AG04450 (cell line): ENCODE measurements at regions of chr6 and their contacts with region 1.

Region 1: DNA sequence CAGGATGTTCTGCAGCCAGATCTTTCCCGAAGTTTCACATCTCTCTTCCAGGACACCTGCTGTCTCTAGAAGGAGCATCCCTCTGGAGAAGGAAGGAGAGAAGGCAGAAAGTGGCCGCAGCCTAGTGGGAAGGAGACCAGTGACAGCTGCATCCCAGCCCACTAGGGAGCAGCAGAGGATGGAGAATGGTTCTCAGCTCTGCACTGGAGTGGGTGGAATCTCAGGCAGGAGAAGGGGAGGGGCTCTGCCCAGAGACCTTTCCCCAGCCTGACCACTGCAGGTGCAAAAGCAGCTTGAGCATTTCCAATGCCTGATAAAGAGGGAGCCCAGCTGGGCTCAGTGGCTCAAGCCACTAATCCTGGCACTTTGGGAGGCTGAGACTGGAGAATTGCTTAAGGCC is 32.3 kb downstream of the NCR2 start:
- DNase-seq: peak; percentile 13
- H3K4me3 ChIP-seq: no peak overlapping the region
- H3K27ac ChIP-seq: no peak overlapping the region
- H3K27me3 ChIP-seq: peaks cover 41% of the 10 kb centered on the region
- CTCF ChIP-seq: peak; percentile 80

Region 2: DNA sequence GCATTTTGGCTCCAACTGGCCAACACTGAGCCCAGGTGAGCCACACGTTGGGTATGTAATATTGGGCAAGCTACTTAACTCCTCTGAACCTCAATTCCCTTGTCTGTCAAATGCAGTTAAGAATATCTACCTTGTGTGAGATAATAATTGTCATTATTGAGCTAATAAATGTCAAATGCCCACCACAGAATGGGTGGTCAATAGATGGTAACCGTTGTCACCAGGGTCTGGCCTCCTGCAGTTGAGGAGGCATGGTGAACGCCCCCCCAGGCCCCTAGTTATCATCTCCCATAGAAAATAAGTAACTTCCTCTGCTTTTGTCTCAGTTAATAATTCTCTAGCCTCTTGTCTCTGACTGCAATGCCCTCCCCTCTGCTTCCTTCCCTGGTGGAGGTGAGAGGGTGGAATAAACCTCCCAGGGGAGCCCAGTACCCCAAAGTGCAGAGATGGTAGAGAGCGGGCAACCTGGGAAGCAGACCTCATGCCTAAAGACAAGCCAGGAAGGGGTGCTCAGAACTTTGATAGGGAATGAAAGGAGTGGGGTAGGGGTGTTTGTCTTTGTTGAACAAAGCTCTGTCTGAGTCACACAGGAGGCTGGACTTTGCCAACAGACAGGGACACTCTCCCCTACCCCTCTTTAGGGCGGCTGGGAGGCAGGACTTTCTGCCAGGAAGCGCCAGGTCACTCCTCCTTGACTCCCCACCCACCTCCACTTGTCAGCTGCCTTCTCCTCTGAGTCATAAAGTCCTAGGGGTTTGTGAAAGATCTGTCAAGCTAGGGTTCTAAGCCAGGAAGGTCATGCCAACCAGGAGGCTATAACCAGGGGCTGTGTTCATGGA is 327.4 kb before region 1 on chr6:
- CTCF ChIA-PET with region 1: no interaction called
- POLR2A ChIA-PET with region 1: no interaction called
- DNase-seq: no peak
- H3K4me3 ChIP-seq: no peak overlapping the region
- H3K27ac ChIP-seq: no peak overlapping the region
- H3K27me3 ChIP-seq: peaks cover 20% of the 10 kb centered on the region
- CTCF ChIP-seq: no peak

Region 3: DNA sequence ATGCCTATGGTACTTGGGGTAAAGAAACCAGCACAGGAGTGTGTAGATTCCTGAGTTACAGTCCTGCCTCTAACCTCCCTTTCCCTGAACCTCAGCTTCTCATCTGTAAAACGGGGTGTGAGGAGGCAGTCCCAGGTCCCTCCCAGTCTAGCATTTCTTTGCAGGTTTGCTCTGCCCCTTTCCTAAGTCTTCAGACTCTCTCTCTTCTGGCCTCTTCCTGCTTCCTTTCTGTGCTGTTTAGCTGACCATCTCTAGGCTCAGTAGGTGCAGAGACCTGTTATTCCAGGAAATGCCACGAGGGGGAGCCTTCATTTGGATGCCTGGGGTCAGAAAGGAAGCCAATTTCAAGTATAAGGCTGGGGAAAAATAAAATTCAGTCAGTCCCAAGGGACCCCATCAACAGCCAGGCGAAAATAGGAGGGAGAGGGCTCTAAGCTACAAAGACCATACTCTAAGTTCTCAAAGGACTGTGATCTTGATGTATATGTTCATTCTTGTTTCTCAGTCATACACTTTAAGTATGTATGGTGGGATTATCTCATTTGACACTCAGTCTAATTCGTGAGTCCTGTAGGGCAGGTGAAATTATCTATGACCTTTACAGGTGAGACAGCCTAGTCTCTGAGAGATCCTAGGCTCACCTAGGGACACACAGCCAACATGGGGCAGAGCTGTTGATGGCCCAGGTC is 56.8 kb after region 1 on chr6:
- CTCF ChIA-PET with region 1: interaction called, 22 read pairs
- POLR2A ChIA-PET with region 1: no interaction called
- DNase-seq: peak; percentile 55
- H3K4me3 ChIP-seq: no peak overlapping the region
- H3K27ac ChIP-seq: no peak overlapping the region
- H3K27me3 ChIP-seq: peaks cover 48% of the 10 kb centered on the region
- CTCF ChIP-seq: peak; percentile 92

Region 4: DNA sequence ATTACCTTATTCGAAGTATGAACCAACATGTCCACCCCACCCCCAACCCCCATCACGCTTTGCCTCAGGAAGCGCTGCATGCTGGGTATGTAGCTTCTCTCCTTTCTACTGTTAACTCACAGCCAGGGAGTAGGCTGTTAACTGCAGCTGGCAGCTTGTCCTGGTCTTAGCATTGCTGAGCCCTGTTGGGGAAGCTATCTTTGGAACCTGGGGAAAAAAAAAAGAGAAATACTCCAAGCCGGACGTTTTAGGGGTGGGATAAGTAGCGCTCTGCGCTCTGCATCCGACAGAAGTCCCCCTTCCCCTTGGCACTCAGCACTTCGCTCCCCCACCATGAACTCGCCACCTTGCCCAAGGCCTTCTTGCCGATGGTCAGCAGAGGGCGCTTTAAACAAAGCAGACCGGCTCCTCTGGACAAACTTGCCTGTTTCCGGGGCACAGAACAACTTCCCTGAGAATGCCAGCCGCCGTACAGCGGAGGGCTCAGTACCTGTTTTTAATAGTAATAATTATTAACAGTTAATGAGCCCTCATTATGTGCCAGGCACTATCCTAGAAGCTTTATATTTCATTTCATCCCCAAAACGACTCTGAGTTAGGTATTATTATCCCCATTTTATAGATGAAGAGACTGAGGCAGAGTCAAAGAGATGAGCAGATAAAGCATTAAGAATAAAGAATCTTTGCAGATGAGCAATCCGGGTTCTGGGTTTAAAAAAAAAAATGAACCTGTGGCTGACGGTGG is 235.3 kb after region 1 on chr6:
- CTCF ChIA-PET with region 1: interaction called, 195 read pairs
- POLR2A ChIA-PET with region 1: interaction called, 4 read pairs
- DNase-seq: peak; percentile 57
- H3K4me3 ChIP-seq: peak overlapping the region; percentile 27
- H3K27ac ChIP-seq: peak overlapping the region; percentile 21
- H3K27me3 ChIP-seq: no peaks in the 10 kb centered on the region
- CTCF ChIP-seq: peak; percentile 94

Region 5: GRCh38 chr6:41683510-41684310 is 316.0 kb after region 1 on chr6:
- CTCF ChIA-PET with region 1: interaction called, 122 read pairs
- POLR2A ChIA-PET with region 1: no interaction called
- DNase-seq: no peak
- H3K4me3 ChIP-seq: peak overlapping the region; percentile 43
- H3K27ac ChIP-seq: no peak overlapping the region
- H3K27me3 ChIP-seq: no peaks in the 10 kb centered on the region
- CTCF ChIP-seq: peak; percentile 86

Region 6: DNA sequence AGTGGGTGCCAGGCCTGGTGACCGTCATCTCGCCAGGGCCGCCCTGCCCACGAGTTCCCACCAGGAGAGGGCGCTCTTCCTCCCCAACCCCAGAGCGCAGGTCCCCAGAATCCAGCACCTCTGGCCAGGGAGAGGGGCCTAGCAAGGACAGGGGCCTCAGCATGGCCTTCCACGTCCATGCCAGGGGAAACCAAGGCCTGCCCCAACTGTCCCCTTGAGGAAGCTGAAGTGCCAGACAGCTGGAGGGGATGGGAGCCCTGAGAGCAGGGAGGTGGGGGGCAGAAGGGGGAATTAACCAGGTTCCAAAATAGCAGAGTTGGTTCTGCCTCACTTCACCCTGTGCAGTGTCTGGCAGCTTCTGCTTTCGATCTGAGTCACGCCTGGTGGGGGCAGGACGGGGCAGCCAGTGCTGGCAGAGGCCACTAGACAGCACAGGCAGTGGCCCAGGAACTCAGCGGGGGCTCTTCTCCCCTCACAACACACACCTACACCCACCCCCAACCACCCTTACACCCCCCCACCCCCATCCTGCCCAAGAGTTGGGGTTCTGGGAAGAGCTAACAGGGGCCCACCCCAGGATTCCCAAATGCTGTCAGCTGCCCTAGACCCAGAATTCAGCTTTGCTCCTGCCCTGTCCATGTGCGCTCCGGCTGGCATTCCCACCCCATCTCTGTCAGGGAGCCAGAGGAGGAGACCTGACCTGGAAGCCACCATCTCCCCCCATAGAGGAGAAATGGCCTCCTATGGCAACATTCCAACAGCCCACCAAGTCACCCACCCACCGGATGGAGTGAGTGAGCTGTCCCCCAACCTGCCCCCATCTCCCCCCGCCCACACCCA is 338.5 kb after region 1 on chr6:
- CTCF ChIA-PET with region 1: interaction called, 12 read pairs
- POLR2A ChIA-PET with region 1: no interaction called
- DNase-seq: no peak
- H3K4me3 ChIP-seq: no peak overlapping the region
- H3K27ac ChIP-seq: peak overlapping the region; percentile 47
- H3K27me3 ChIP-seq: no peaks in the 10 kb centered on the region
- CTCF ChIP-seq: peak; percentile 71